A673 (cell line): ENCODE measurements at regions of chr16 and their contacts with region 1.

Region 1: DNA sequence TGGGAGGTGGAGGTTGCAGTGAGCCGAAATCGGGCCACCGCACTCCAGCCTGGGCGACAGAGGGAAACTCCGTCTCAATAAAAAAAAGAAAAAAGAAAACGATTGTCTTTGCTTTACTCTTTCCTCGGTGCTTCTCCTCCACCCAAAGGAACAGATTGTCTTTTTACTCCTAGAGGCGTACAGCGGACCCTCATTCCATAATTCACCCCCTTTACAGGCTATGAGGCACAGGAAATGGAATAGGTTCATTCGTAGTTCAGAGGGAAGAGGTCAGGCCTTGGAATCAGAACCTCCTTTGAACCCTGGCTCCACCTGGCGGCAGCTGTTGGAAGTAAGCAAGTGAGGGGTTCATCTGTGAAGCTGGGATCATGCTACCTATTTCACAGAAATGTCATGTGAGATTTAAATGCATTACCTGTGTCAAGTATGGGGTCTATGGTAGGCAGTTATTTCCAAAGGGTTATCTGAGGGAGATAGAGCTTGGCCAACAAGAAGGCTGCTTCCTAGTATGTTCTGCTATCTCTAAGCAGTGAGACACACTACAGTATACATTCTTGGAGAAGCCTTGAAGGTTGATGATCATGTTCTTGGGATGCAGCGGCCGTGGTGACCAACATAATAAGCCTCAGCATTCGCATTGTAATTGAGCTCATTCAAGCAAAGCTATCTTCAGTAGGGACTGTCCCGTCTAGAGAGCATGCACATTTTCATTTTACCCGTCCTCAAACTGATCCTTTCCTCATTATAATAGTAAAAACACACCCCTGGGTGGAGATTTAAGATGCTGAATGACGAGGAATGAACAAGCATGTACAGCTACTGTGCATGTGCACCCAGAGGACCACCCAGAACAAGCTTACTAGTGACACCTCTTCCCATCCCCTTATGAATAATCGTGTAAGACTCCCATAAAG is 18.7 kb upstream of the ZNF689 start:
- DNase-seq: peak; percentile 89
- H3K4me3 ChIP-seq: no peak overlapping the region
- H3K27ac ChIP-seq: no peak overlapping the region
- H3K4me1 ChIP-seq: peaks cover 7% of the 10 kb centered on the region
- H3K27me3 ChIP-seq: no peaks in the 10 kb centered on the region
- CTCF ChIP-seq: peak; percentile 94

Region 2: DNA sequence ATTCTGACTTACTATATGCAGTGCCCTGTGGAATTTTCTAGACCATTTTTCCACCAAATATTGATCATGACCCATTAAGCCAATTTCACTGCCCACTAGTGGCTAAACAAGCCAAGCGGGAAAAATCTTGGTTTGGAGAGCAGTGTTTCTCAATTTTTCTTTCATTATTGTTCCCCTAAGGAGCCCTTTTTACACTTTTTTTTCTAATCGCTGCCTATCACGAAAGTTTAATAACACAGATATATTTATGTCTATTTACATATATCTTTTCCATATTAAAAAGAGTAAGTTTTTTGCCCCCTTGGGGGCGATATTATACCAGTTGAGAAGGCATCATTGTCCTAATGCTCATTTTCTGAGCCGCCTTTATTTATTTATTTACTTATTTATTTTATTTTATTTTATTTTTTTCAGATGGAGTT is 587.0 kb before region 1 on chr16:
- CTCF ChIA-PET with region 1: no interaction called
- POLR2A ChIA-PET with region 1: no interaction called
- intact Hi-C with region 1: loop called (anchors 10 kb)
- DNase-seq: peak; percentile 57
- H3K4me3 ChIP-seq: no peak overlapping the region
- H3K27ac ChIP-seq: no peak overlapping the region
- H3K4me1 ChIP-seq: no peaks in the 10 kb centered on the region
- H3K27me3 ChIP-seq: no peaks in the 10 kb centered on the region
- CTCF ChIP-seq: peak; percentile 63

Region 3: DNA sequence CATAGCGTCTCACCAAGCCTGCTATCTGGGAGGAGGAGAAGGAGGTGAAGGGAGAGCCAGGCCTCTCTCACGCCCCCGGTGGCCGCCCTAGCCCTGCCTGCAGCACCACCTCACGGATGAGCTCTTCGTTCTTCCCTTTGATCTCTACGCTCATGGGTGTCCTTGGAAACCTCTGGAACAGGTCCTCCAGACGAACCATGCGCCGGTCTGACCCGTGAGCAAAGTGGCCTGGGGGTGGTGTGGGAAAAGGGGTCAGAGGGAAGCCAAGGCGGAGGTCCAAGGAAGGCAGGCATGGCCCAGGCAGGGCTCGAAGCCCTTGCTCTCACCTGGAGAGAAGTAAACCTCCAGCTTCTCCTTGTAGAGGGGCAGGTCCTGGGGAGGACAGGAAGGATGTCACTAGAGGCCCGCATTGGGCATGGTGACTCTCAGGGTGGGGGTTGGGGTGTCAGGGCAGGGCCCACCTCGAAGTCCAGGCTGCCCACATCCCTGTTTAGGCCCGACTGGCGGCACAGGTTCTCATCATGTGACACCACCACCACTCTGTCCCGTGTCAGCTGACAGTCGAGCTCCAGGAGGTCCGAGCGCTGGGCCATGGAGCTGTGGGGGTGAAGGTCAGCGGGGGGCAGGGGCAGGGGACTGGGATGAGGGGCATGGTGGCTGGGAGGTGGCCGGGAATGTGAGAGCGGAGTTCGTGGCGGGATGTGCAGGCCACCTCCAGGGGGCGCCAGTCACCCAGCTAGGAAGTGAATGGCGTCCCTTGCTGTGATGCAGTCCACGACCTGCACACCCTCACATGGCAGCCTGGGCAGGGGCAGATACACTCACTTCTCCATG is 516.5 kb before region 1 on chr16:
- CTCF ChIA-PET with region 1: no interaction called
- POLR2A ChIA-PET with region 1: no interaction called
- intact Hi-C with region 1: loop called (anchors 5 kb)
- DNase-seq: peak; percentile 77
- H3K4me3 ChIP-seq: no peak overlapping the region
- H3K27ac ChIP-seq: no peak overlapping the region
- H3K4me1 ChIP-seq: no peaks in the 10 kb centered on the region
- H3K27me3 ChIP-seq: no peaks in the 10 kb centered on the region
- CTCF ChIP-seq: peak; percentile 80

Region 4: GRCh38 chr16:30688675-30689074 is 59.8 kb after region 1 on chr16:
- CTCF ChIA-PET with region 1: interaction called, 5 read pairs
- POLR2A ChIA-PET with region 1: no interaction called
- intact Hi-C with region 1: loop called (anchors 10 kb)
- DNase-seq: no peak
- H3K4me3 ChIP-seq: no peak overlapping the region
- H3K27ac ChIP-seq: no peak overlapping the region
- H3K4me1 ChIP-seq: peaks cover 3% of the 10 kb centered on the region
- H3K27me3 ChIP-seq: no peaks in the 10 kb centered on the region
- CTCF ChIP-seq: no peak